Right ventricle myocardium inferior (tissue), 1 donor: ENCODE measurements at regions of chr7 and their contacts with region 1.

Region 1: DNA sequence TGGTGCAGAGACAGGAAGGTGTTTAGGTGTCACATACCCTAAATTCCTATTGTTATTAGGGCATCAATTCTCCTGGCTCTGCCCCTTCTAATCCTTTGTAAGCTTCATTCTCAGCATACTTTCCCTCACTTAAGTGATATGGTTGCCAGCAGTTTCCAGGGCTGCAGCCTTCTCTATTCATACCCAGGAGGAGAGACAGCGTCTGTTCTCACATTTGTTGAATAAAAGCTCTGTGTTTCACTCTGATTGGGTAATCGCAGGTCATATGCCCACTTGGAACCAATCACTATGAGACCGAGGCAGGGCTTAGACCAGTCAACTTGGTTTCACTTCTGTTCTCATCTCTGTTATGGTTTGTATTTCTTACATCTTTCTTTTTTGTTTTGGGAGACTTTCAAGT is 109.6 kb upstream of the MTPN start:
- DNase-seq: no peak
- ATAC-seq: peak; percentile 100

Region 2: DNA sequence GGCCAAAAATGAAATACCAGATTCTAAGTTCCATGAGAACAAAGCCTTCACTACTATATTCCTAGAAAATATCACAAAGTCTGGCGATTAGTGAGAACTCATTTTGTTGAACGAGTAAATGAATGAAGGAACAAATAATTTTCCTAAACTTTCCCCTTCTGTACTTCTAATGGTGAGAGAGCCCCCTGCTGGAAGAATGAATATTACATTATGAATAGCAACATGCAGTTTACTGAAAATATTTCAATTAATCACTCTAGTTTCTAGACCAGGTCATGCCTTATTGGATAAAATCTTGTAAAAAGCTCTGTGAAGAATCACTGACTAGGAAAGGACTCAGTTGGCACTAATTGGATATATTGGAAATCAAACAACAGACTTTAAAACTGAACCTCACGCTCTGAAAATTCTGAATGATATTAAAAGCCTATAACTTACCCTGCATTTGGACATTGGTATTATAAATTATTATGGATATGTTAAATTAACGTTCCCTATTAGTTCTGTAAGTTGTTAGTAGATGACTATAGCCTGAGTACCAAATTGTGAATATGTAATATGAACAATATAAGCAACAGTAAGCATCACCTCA is 77.1 kb before region 1 on chr7:
- intact Hi-C with region 1: no loop called
- DNase-seq: no peak
- ATAC-seq: no peak

Region 3: GRCh38 chr7:136036336-136036735 is 50.4 kb before region 1 on chr7:
- intact Hi-C with region 1: loop called (anchors 2 kb)
- DNase-seq: no peak
- ATAC-seq: no peak